Posterior vena cava (tissue), 2 donors: ENCODE measurements at regions of chr3 and their contacts with region 1.

Region 1: GRCh38 chr3:36707623-36708409 is 56.5 kb downstream of the DCLK3 start:
- DNase-seq: no peak

Region 2: DNA sequence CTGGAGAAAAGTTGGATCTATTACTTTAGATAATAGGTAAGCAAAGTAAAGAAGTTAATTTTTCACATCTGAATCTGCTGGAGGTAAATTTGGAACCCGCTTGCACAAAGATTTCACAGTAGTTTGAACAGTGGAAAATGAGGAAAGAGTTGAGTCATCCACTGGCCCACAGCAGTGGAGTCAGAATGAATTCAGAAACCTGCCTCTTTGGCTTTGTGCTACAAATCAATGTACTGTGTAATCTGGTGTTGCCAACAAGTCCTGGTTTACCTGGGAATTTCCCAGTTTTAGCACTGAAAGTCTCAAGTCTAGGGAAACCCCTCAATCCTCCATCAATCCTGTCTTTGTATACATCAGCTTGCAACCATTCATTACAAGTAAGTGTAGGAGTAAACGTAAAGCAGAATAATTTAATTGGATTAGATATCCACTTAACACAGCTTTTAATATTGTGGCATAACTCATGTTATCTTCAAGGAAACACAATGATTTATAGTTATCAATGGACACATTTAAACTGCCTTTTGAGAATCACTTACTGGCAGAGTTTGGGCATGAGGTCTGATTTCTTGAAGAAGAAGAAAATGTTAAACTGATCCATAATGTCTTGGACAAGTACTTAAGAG is 44.0 kb before region 1 on chr3:
- intact Hi-C with region 1: loop called in 1 of 2 experiments (anchors 1 kb)
- DNase-seq: no peak